ENCODE measurements at regions of chr20 and their contacts with region 1.

Region 1: GRCh38 chr20:63973636-63974402 is 4.1 kb upstream of the ZNF512B start:
- DNase-seq: peak; percentile 89
- H3K4me3 ChIP-seq: peak overlapping the region; percentile 55
- H3K27ac ChIP-seq: peak overlapping the region; percentile 59
- H3K4me1 ChIP-seq: peaks cover 47% of the 10 kb centered on the region
- H3K27me3 ChIP-seq: no peaks in the 10 kb centered on the region
- CTCF ChIP-seq: peak; percentile 99

Region 2: DNA sequence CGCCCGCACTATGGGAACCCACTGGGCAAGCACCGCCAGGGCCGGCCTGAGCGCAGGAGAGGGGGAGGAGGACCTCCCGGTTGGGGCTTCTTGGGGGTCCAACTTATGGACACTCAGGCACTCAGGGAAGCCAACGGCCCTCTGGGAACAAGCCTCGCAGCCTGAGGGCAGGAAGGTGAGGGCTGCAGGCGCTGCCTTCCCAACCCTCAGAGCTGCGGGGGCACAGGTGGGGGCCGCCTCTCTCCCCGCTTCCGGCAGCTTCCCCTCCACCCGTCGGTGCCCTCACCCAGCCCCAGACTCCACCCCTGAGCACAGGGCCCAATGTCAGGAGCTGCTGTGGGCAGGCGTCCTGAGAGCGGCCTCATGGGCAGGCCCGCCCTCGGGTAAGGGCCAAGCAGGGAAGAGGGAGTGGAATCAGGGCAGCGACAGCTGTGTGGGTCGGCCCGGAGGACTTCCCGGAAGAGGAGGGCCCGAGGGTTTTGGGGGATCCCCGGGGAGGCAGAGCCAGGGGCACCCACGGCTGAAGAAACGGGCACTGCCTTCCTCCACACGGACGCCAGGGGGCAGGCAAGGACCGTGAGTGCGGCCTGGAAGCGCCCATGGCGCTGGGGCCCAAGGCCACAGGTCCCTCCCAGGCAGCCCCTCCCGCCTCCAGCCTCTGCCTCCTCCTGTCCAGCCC is 436.2 kb before region 1 on chr20:
- intact Hi-C with region 1: loop called (anchors 5 kb)
- DNase-seq: peak; percentile 85
- H3K4me3 ChIP-seq: peak overlapping the region; percentile 55
- H3K27ac ChIP-seq: peak overlapping the region; percentile 66
- H3K4me1 ChIP-seq: peaks cover 25% of the 10 kb centered on the region
- H3K27me3 ChIP-seq: peaks cover 37% of the 10 kb centered on the region
- CTCF ChIP-seq: peak; percentile 98